H1 (cell line): ENCODE measurements at regions of chr10 and their contacts with region 1.

Region 1: DNA sequence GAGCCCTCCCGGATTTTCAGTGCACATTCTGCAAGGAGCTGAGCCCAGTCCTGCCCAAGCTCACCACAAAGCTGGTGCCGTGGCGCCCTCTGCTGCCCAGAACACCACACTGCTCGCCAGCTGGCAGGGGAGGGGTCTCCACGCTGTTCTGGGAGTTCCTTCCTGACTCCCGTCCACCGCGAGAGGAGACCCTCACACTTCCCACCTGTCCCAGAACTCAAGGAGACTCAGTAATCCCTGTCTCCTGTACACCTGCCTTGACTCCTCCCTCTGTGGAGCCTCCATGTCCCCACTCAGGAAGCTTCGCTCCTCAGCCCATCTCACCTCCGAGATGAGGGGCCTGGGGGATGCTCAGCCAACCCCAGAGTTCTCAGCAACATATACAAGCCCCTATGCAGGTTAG is 11.3 kb downstream of the C10orf105 start:
- DNase-seq: peak; percentile 62 to 98
- H3K4me3 ChIP-seq: peak overlapping the region in 1 of 4 experiments; percentile 1; a peak in 1 of 8 replicates
- H3K27ac ChIP-seq: no peak overlapping the region
- H3K4me1 ChIP-seq: peaks cover 0 to 2% (median 0%) of the 10 kb centered on the region in 4 experiments; a peak in 2 of 7 replicates
- H3K27me3 ChIP-seq: peaks cover 0 to 3% (median 0%) of the 10 kb centered on the region in 4 experiments; a peak in 1 of 7 replicates
- CTCF ChIP-seq: peak; percentile 95 to 99 (median 98)
- EP300 ChIP-seq: no peak
- POLR2A ChIP-seq: no peak
- RAD21 ChIP-seq: peak; percentile 98 to 99

Region 2: GRCh38 chr10:71319042-71319799 is 389.1 kb before region 1 on chr10 and contains the start of gene SLC29A3:
- CTCF ChIA-PET with region 1: interaction called, 109 read pairs
- POLR2A ChIA-PET with region 1: no interaction called
- DNase-seq: peak; percentile 44 to 87
- H3K4me3 ChIP-seq: peak within 1 kb of the TSS; percentile 45 to 87 (median 68)
- H3K27ac ChIP-seq: peak within 1 kb of the TSS; percentile 11; the same call in 1 of the 2 replicates
- H3K4me1 ChIP-seq: peaks cover 2 to 10% (median 3%) of the 10 kb centered on the region in 4 experiments; a peak in 4 of 7 replicates
- H3K27me3 ChIP-seq: no peaks in the 10 kb centered on the region
- CTCF ChIP-seq: peak; percentile 76 to 89 (median 88)
- EP300 ChIP-seq: no peak
- POLR2A ChIP-seq: peak in 1 of 2 experiments; percentile 74; a peak in 2 of 3 replicates
- RAD21 ChIP-seq: peak; percentile 76 to 85
- total RNA-seq, gene SLC29A3: 14.0 and 15.2 TPM in 2 replicates

Region 3: GRCh38 chr10:71494980-71495381 is 213.3 kb before region 1 on chr10:
- CTCF ChIA-PET with region 1: interaction called, 10 read pairs
- POLR2A ChIA-PET with region 1: no interaction called
- DNase-seq: no peak
- H3K4me3 ChIP-seq: no peak overlapping the region
- H3K27ac ChIP-seq: no peak overlapping the region
- H3K4me1 ChIP-seq: peaks cover 0 to 4% (median 1%) of the 10 kb centered on the region in 4 experiments; a peak in 1 of 7 replicates
- H3K27me3 ChIP-seq: peaks cover 0 to 33% (median 23%) of the 10 kb centered on the region in 4 experiments; a peak in 6 of 7 replicates
- CTCF ChIP-seq: no peak
- EP300 ChIP-seq: no peak
- POLR2A ChIP-seq: no peak
- RAD21 ChIP-seq: no peak

Region 4: GRCh38 chr10:71608819-71609768 is 99.2 kb before region 1 on chr10:
- CTCF ChIA-PET with region 1: interaction called, 71 read pairs
- POLR2A ChIA-PET with region 1: no interaction called
- DNase-seq: peak; percentile 67 to 92
- H3K4me3 ChIP-seq: no peak overlapping the region
- H3K27ac ChIP-seq: no peak overlapping the region
- H3K4me1 ChIP-seq: peaks cover 6 to 18% (median 17%) of the 10 kb centered on the region in 4 experiments
- H3K27me3 ChIP-seq: no peaks in the 10 kb centered on the region
- CTCF ChIP-seq: peak; percentile 85 to 95 (median 91)
- EP300 ChIP-seq: no peak
- POLR2A ChIP-seq: no peak
- RAD21 ChIP-seq: peak; percentile 85 to 90

Region 5: GRCh38 chr10:71665456-71665855 is 42.8 kb before region 1 on chr10:
- CTCF ChIA-PET with region 1: interaction called, 11 read pairs
- POLR2A ChIA-PET with region 1: no interaction called
- DNase-seq: no peak
- H3K4me3 ChIP-seq: no peak overlapping the region
- H3K27ac ChIP-seq: no peak overlapping the region; the same call in 1 of the 2 replicates
- H3K4me1 ChIP-seq: peaks cover 9 to 12% (median 9%) of the 10 kb centered on the region in 4 experiments
- H3K27me3 ChIP-seq: no peaks in the 10 kb centered on the region; a peak in 2 of 7 replicates
- CTCF ChIP-seq: no peak
- EP300 ChIP-seq: no peak
- POLR2A ChIP-seq: no peak
- RAD21 ChIP-seq: no peak

Region 6: DNA sequence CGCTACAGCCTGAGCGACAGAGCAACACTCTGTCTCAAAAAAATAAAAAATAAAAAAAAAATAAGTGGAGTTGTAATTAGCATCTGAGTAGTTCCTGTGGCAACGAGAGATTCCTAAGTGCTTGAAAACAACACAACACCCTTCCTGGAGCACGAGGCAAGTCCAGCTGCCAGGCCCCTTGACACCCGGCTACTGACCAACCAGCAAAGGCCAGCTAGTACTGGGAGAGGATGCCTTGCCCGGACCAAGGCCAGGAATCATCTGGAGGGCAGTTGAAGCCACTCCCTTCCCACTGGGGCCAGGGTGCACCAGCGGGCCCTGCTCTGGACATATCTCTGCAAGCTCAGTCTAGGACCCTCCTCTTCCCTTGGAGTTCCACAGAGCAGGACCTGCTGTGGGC is 10.7 kb after region 1 on chr10:
- CTCF ChIA-PET with region 1: interaction called, 65 read pairs
- POLR2A ChIA-PET with region 1: no interaction called
- DNase-seq: no peak
- H3K4me3 ChIP-seq: no peak overlapping the region
- H3K27ac ChIP-seq: no peak overlapping the region
- H3K4me1 ChIP-seq: peaks cover 0 to 14% (median 5%) of the 10 kb centered on the region in 4 experiments; a peak in 6 of 7 replicates
- H3K27me3 ChIP-seq: peaks cover 0 to 6% (median 0%) of the 10 kb centered on the region in 4 experiments; a peak in 2 of 7 replicates
- CTCF ChIP-seq: no peak
- EP300 ChIP-seq: no peak
- POLR2A ChIP-seq: no peak
- RAD21 ChIP-seq: no peak

Region 7: GRCh38 chr10:71812016-71812912 is 104.0 kb after region 1 on chr10:
- CTCF ChIA-PET with region 1: interaction called, 30 read pairs
- POLR2A ChIA-PET with region 1: no interaction called
- DNase-seq: peak in 1 of 2 experiments; percentile 87
- H3K4me3 ChIP-seq: no peak overlapping the region
- H3K27ac ChIP-seq: no peak overlapping the region
- H3K4me1 ChIP-seq: peaks cover 0 to 3% (median 0%) of the 10 kb centered on the region in 4 experiments; a peak in 1 of 7 replicates
- H3K27me3 ChIP-seq: no peaks in the 10 kb centered on the region
- CTCF ChIP-seq: peak; percentile 71 to 82 (median 79)
- EP300 ChIP-seq: no peak
- POLR2A ChIP-seq: no peak
- RAD21 ChIP-seq: peak; percentile 83 to 88